Right ventricle myocardium inferior (tissue), 1 donor: ENCODE measurements at regions of chr3 and their contacts with region 1.

Region 1: DNA sequence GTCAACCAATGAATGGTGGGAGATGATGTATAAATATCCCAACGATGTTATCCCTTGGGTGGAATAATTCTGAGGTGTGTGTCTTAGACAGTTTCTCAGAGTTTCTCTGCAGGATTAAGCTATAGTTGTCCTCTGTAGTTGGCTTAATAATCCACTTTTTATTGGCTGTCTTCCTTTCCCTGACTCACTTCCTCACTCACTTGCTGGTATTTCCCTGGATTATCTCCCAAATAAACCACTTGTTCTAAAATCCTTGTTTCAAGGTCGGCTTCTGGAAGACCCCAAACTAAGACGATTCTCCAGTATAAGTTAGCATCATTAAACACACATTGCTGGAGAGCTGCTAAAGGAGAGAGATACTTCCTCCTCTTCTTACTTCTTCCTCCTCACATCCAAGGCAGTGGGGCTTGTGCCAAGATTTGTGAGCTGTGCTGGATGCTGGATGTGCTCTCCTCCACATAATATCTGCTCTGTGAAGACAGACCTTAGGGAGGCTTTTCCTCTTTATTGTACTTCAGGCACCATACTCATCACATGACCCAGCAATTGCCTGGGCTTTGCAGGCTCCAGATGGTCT is 22.5 kb upstream of the ROPN1 start:
- DNase-seq: no peak
- ATAC-seq: no peak

Region 2: GRCh38 chr3:123971406-123971805 is 43.0 kb before region 1 on chr3:
- intact Hi-C with region 1: no loop called
- DNase-seq: no peak
- ATAC-seq: no peak

Region 3: DNA sequence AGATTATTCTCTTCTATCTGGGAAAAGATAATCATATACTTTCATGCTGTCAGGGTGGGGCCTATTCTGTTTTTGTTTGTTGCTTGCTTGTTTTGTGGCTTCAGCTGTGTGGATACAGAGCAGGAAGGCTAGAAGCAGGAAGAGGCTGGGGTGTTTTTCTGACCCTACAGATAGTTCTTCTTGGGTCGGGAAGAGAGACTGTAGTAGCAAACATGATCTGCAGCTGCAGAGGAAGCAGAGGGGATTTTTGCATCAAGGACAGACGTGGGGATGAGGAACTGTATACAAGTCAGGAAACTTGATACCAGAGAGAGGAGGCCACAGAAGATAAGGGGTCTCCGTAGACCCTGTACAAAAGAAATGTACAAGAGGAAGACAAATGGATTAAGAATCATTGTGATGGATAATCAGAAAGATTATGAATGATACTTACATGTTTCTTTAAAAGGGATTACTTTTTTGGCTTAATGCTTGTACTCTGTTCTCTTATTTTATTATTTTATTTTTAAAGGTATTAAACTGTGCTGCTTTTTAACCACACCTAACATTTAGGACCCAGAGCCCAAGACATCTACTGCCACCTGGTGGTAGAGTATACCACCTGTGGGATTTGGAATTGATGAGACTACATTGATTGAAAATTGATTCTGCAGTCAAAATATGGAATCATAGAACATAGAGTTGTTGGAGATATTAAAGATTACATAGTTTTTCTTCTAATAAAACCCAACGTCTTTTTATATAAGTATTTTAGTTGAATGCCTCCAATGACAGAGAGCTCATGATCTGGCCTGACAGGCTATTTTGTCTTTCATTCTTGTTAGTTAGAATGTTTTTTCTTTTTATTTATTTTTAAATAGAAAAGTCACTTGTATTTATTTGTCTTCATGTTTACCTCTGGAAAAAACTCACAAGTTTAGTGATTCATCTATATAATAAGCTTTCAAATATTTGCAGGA is 64.8 kb after region 1 on chr3:
- intact Hi-C with region 1: loop called (anchors 1 kb)
- DNase-seq: no peak
- ATAC-seq: no peak

Region 4: DNA sequence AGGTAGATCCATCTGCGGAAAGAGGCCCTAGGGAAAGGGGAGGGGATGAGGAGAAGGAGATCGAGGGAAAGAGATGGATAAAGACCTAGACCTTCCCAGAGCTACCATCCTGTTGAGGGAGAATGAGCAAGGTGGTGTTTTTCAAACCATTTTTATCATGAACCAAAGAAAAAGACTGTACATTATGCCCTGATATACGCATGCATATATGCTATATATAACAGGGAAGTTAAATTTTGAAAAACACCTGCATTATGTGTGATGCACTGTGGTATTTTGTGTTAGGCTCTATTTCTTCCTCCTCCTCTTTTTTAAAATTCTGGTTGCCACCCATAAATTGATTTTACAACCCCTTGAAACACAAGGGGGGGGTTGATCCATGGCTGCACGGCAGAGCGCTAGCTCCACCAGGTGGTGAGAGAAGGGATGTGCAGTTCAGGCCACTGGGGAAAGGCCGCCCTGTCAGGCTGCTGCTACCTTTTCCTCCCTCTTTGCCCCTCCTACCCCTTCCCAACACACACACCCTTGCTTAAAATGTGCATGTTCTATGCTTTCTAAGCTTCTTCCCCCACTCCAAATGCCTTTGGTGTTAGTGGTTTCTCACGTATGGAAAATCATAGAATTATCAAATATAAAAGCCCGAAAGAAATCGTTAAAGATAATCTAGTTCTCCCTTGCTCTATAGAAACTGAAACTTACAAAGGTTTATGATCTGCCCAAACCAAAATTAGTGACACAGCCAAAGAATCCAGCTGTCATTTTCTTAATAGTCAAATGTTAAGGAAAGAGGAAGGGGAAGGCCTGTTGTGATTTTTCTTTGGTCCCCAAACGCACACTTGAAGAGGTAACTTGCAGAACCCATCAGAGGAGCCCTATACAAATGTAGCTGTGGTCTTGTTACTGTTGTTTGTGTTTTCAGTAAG is 453.8 kb after region 1 on chr3:
- intact Hi-C with region 1: loop called (anchors 5 kb)
- DNase-seq: no peak
- ATAC-seq: no peak